ENCODE measurements at regions of chrX and their contacts with region 1.

Region 1: GRCh38 chrX:96182366-96182765 is 502.3 kb upstream of the DIAPH2 start:
- DNase-seq: peak; percentile 69
- ATAC-seq: peak; percentile 88
- H3K4me3 ChIP-seq: no peak overlapping the region
- H3K27ac ChIP-seq: no peak overlapping the region
- H3K4me1 ChIP-seq: no peaks in the 10 kb centered on the region
- H3K27me3 ChIP-seq: no peaks in the 10 kb centered on the region
- CTCF ChIP-seq: peak; percentile 85

Region 2: GRCh38 chrX:95346856-95347255 is 835.5 kb before region 1 on chrX:
- CTCF ChIA-PET with region 1: interaction called, 4 read pairs
- POLR2A ChIA-PET with region 1: no interaction called
- intact Hi-C with region 1: loop called (anchors 5 kb)
- DNase-seq: peak; percentile 17
- ATAC-seq: no peak
- H3K4me3 ChIP-seq: no peak overlapping the region
- H3K27ac ChIP-seq: no peak overlapping the region
- H3K4me1 ChIP-seq: no peaks in the 10 kb centered on the region
- H3K27me3 ChIP-seq: no peaks in the 10 kb centered on the region
- CTCF ChIP-seq: peak; percentile 56

Region 3: GRCh38 chrX:95764972-95765451 is 417.4 kb before region 1 on chrX:
- CTCF ChIA-PET with region 1: interaction called, 3 read pairs
- POLR2A ChIA-PET with region 1: no interaction called
- intact Hi-C with region 1: loop called (anchors 1 kb)
- DNase-seq: peak; percentile 67
- ATAC-seq: peak; percentile 74
- H3K4me3 ChIP-seq: no peak overlapping the region
- H3K27ac ChIP-seq: no peak overlapping the region
- H3K4me1 ChIP-seq: no peaks in the 10 kb centered on the region
- H3K27me3 ChIP-seq: no peaks in the 10 kb centered on the region
- CTCF ChIP-seq: peak; percentile 66

Region 4: GRCh38 chrX:95903490-95903889 is 278.9 kb before region 1 on chrX:
- CTCF ChIA-PET with region 1: interaction called, 6 read pairs
- POLR2A ChIA-PET with region 1: no interaction called
- intact Hi-C with region 1: loop called (anchors 2 kb)
- DNase-seq: peak; percentile 34
- ATAC-seq: peak; percentile 62
- H3K4me3 ChIP-seq: no peak overlapping the region
- H3K27ac ChIP-seq: no peak overlapping the region
- H3K4me1 ChIP-seq: no peaks in the 10 kb centered on the region
- H3K27me3 ChIP-seq: no peaks in the 10 kb centered on the region
- CTCF ChIP-seq: peak; percentile 57

Region 5: GRCh38 chrX:96204928-96205327 is 22.6 kb after region 1 on chrX:
- CTCF ChIA-PET with region 1: no interaction called
- POLR2A ChIA-PET with region 1: no interaction called
- intact Hi-C with region 1: no loop called
- DNase-seq: no peak
- ATAC-seq: no peak
- H3K4me3 ChIP-seq: no peak overlapping the region
- H3K27ac ChIP-seq: no peak overlapping the region
- H3K4me1 ChIP-seq: no peaks in the 10 kb centered on the region
- H3K27me3 ChIP-seq: no peaks in the 10 kb centered on the region
- CTCF ChIP-seq: no peak

Region 6: DNA sequence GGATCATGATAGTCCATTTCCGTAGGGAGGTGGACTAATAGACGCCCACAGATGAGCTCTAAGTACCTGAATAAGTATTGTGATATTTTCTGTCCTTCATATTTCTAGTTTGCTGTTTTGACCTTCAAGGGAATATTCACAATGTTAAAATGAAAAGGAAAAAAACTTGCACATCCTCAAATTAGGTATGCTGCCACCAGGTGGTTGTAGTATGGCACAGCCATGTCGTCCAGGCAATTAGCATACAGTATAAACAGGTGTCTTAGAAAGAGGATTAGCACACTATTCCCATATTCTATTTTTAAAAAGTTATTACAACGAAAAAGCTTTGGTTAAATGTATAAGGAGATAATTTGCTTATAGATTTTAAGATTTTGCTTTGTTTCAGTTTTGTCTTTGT is 1503.4 kb after region 1 on chrX:
- CTCF ChIA-PET with region 1: no interaction called
- POLR2A ChIA-PET with region 1: no interaction called
- intact Hi-C with region 1: loop called (anchors 5 kb)
- DNase-seq: peak; percentile 62
- ATAC-seq: peak; percentile 57
- H3K4me3 ChIP-seq: no peak overlapping the region
- H3K27ac ChIP-seq: no peak overlapping the region
- H3K4me1 ChIP-seq: no peaks in the 10 kb centered on the region
- H3K27me3 ChIP-seq: no peaks in the 10 kb centered on the region
- CTCF ChIP-seq: peak; percentile 77

Measured in PC-3 (cell line).